ENCODE measurements at regions of chr2 and their contacts with region 1.

Region 1: GRCh38 chr2:225041851-225042799 is at the start of gene DOCK10:
- DNase-seq: peak; percentile 63
- ATAC-seq: peak; percentile 43
- H3K4me3 Mint-ChIP-seq: peak within 1 kb of the TSS; percentile 96
- H3K27ac Mint-ChIP-seq: peak within 1 kb of the TSS; percentile 96
- H3K4me1 Mint-ChIP-seq: peaks cover 56% of the 10 kb centered on the region
- H3K27me3 Mint-ChIP-seq: no peaks in the 10 kb centered on the region
- CTCF ChIP-seq: no peak
- total RNA-seq, gene DOCK10: 159 and 172 TPM in 2 replicates

Region 2: GRCh38 chr2:223537669-223538601 is 1504.2 kb before region 1 on chr2:
- CTCF ChIA-PET with region 1: no interaction called
- POLR2A ChIA-PET with region 1: no interaction called
- intact Hi-C with region 1: no loop called
- DNase-seq: no peak
- ATAC-seq: no peak
- H3K4me3 Mint-ChIP-seq: no peak overlapping the region
- H3K27ac Mint-ChIP-seq: no peak overlapping the region
- H3K4me1 Mint-ChIP-seq: no peaks in the 10 kb centered on the region
- H3K27me3 Mint-ChIP-seq: no peaks in the 10 kb centered on the region
- CTCF ChIP-seq: no peak

Region 3: GRCh38 chr2:224585205-224586088 is 456.7 kb before region 1 on chr2 and contains the start of gene CUL3:
- CTCF ChIA-PET with region 1: no interaction called
- POLR2A ChIA-PET with region 1: interaction called, 11 read pairs
- intact Hi-C with region 1: loop called (anchors 1 kb)
- DNase-seq: peak; percentile 99
- ATAC-seq: peak; percentile 89
- H3K4me3 Mint-ChIP-seq: peak within 1 kb of the TSS; percentile 96
- H3K27ac Mint-ChIP-seq: peak within 1 kb of the TSS; percentile 93
- H3K4me1 Mint-ChIP-seq: peaks cover 47% of the 10 kb centered on the region
- H3K27me3 Mint-ChIP-seq: no peaks in the 10 kb centered on the region
- CTCF ChIP-seq: no peak
- total RNA-seq, gene CUL3: 99.4 and 114 TPM in 2 replicates

Region 4: GRCh38 chr2:224946895-224947294 is 95.2 kb before region 1 on chr2:
- CTCF ChIA-PET with region 1: no interaction called
- POLR2A ChIA-PET with region 1: interaction called, 4 read pairs
- intact Hi-C with region 1: loop called (anchors 5 kb)
- DNase-seq: no peak
- ATAC-seq: peak; percentile 65
- H3K4me3 Mint-ChIP-seq: peak overlapping the region; percentile 90
- H3K27ac Mint-ChIP-seq: peak overlapping the region; percentile 92
- H3K4me1 Mint-ChIP-seq: peaks cover 87% of the 10 kb centered on the region
- H3K27me3 Mint-ChIP-seq: no peaks in the 10 kb centered on the region
- CTCF ChIP-seq: no peak

Region 5: GRCh38 chr2:225017713-225018112 is 24.4 kb before region 1 on chr2:
- CTCF ChIA-PET with region 1: no interaction called
- POLR2A ChIA-PET with region 1: interaction called, 3 read pairs
- intact Hi-C with region 1: loop called (anchors 2 kb)
- DNase-seq: no peak
- ATAC-seq: no peak
- H3K4me3 Mint-ChIP-seq: no peak overlapping the region
- H3K27ac Mint-ChIP-seq: no peak overlapping the region
- H3K4me1 Mint-ChIP-seq: peaks cover 11% of the 10 kb centered on the region
- H3K27me3 Mint-ChIP-seq: no peaks in the 10 kb centered on the region
- CTCF ChIP-seq: no peak

Region 6: DNA sequence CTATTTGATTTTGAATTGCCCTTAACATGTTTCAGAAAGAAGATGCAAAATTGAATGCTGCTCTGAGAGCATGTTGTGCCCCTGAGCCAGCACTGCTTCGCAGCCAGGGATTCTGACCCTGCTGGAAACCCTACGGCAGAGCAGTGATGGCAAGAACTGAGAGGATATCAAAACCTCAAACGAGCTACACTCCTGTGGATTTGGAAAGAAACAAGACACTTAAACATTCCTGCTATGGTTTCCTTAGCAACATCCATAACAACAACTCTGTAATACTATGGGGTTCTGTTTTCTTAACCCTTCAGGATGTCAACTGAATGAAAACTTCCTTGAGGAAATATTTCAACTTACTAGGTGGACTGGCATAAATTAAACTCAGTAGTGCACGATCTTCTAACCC is 1006.5 kb after region 1 on chr2:
- CTCF ChIA-PET with region 1: no interaction called
- POLR2A ChIA-PET with region 1: no interaction called
- intact Hi-C with region 1: no loop called
- DNase-seq: no peak
- ATAC-seq: no peak
- H3K4me3 Mint-ChIP-seq: no peak overlapping the region
- H3K27ac Mint-ChIP-seq: no peak overlapping the region
- H3K4me1 Mint-ChIP-seq: no peaks in the 10 kb centered on the region
- H3K27me3 Mint-ChIP-seq: no peaks in the 10 kb centered on the region
- CTCF ChIP-seq: no peak

Region 7: DNA sequence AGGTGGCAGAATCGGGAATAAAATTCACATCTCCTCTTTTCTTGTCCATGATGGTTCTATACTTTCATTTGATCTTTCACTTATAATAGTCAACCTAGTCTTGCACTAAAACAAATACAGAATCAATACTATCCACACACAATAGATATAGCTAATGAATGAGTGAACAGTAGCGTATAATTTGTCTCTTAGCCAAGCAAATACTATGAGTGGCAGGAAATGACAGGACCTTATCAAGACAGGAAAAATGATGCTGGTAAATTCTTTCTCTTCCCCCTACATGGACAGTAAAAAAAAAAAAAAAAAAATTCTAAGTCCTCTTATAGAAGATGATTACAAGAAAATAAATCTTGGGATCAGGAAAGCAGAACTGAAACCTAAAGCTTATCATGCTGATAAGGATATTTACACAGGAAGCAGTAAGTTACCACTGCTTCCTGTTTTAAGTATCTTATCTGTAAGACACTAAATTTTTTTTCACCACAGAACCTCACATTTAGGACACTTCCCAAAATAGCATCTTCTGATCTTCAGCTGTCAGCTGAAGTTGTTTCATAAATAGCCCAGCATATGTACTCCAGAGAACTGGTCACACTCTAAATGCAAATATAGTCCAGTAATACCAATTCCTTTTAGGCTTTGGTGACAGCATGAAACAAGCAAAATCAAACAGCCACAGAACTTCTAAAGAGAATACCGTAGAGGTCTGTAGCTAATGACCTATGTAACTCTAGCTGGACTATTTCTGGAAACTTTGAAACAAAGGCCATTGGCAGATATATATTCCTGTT is 1730.5 kb after region 1 on chr2:
- CTCF ChIA-PET with region 1: no interaction called
- POLR2A ChIA-PET with region 1: interaction called, 10 read pairs
- intact Hi-C with region 1: no loop called
- DNase-seq: no peak
- ATAC-seq: peak; percentile 83
- H3K4me3 Mint-ChIP-seq: peak overlapping the region; percentile 35
- H3K27ac Mint-ChIP-seq: peak overlapping the region; percentile 71
- H3K4me1 Mint-ChIP-seq: peaks cover 49% of the 10 kb centered on the region
- H3K27me3 Mint-ChIP-seq: no peaks in the 10 kb centered on the region
- CTCF ChIP-seq: no peak